ENCODE measurements at regions of chr9 and their contacts with region 1.

Region 1: GRCh38 chr9:125061391-125061790 is 81.9 kb downstream of the SCAI start:
- DNase-seq: no peak

Region 2: GRCh38 chr9:126203126-126203712 is 1141.8 kb after region 1 on chr9:
- intact Hi-C with region 1: loop called in 1 of 2 experiments (anchors 5 kb)
- DNase-seq: no peak